Naive thymus-derived CD4-positive, alpha-beta T cell (primary cell): ENCODE measurements at regions of chr22 and their contacts with region 1.

Region 1: GRCh38 chr22:30968924-30969539 is at the start of gene TUG1:
- DNase-seq: peak; percentile 88 to 98 (median 97)
- ATAC-seq: peak; percentile 96
- H3K4me3 ChIP-seq: peak within 1 kb of the TSS; percentile 59
- H3K4me3 Mint-ChIP-seq: peak within 1 kb of the TSS; percentile 90 to 96 (median 93)
- H3K27ac ChIP-seq: peak within 1 kb of the TSS; percentile 94
- H3K27ac Mint-ChIP-seq: peak within 1 kb of the TSS; percentile 90 to 98 (median 97)
- H3K4me1 ChIP-seq: peaks cover 22 to 23% of the 10 kb centered on the region in 2 donors
- H3K4me1 Mint-ChIP-seq: peaks cover 12 to 67% (median 58%) of the 10 kb centered on the region in 7 donors
- H3K27me3 ChIP-seq: no peaks in the 10 kb centered on the region
- H3K27me3 Mint-ChIP-seq: peaks cover 0 to 4% (median 0%) of the 10 kb centered on the region in 5 donors
- total RNA-seq, gene TUG1: 82.7 to 159 (median 113) TPM

Region 2: GRCh38 chr22:29603358-29604075 is 1365.5 kb before region 1 on chr22 and contains the start of gene NF2:
- CTCF ChIA-PET with region 1: no interaction called
- POLR2A ChIA-PET with region 1: no interaction called
- intact Hi-C with region 1: loop called in 1 of 2 experiments (anchors 2 kb)
- DNase-seq: peak; percentile 96 to 99 (median 98)
- ATAC-seq: peak; percentile 98
- H3K4me3 ChIP-seq: peak within 1 kb of the TSS; percentile 92
- H3K4me3 Mint-ChIP-seq: peak within 1 kb of the TSS; percentile 85 to 98 (median 96)
- H3K27ac ChIP-seq: peak within 1 kb of the TSS; percentile 91
- H3K27ac Mint-ChIP-seq: peak within 1 kb of the TSS; percentile 91 to 99 (median 98)
- H3K4me1 ChIP-seq: peaks cover 11 to 16% of the 10 kb centered on the region in 2 donors
- H3K4me1 Mint-ChIP-seq: peaks cover 13 to 40% (median 28%) of the 10 kb centered on the region in 7 donors
- H3K27me3 ChIP-seq: no peaks in the 10 kb centered on the region
- H3K27me3 Mint-ChIP-seq: no peaks in the 10 kb centered on the region
- total RNA-seq, gene NF2: 27.6 to 56.3 (median 28.3) TPM

Region 3: DNA sequence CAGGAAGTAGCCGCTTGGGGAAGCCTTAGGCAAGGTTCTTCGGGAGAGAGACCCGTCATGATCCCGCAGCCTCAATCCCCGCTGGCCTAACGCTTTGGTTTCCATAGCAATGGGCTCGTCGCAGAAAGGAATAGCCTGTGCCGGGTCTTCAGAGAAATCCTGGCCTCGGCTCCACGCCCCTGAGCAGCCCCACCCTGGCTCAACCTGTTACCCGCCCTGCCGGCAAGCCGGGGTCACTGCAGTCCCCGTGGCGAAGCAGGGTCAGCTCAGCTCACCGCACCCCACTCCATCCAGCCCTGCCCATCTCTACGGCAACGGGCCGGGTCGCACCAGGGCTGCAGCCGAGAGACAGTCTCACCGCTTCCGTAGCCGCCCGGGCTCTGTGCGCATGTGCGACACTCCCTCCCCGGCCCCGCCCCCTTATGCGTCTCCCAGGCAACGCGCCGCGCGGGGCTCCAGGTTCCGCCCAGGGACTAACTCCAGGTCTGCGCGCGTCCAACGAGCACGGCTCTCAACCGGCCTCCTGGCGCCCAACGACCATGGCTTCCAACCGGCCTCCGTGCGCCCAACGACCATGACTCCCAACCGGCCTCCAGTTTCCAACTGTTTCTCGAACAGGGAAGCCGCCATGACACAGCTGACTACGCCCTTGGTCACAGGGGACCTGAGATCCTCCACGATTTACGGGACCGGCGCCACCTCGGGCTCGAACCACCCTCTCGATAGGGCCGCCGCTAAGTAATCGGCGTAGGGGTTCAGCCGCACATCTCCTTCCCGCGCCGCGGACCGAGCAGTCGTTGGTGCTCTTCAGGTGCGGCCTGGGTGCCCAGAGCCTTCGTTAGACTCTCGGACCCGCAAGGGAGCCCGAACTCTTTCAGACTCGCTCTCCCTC is 301.3 kb before region 1 on chr22 and contains the start of gene DUSP18:
- CTCF ChIA-PET with region 1: no interaction called
- POLR2A ChIA-PET with region 1: no interaction called
- intact Hi-C with region 1: loop called in 1 of 2 experiments (anchors 1 kb)
- DNase-seq: peak; percentile 87 to 95 (median 92)
- ATAC-seq: peak; percentile 96
- H3K4me3 ChIP-seq: peak within 1 kb of the TSS; percentile 98
- H3K4me3 Mint-ChIP-seq: peak within 1 kb of the TSS; percentile 90 to 98 (median 95)
- H3K27ac ChIP-seq: peak within 1 kb of the TSS; percentile 71
- H3K27ac Mint-ChIP-seq: peak within 1 kb of the TSS; percentile 74 to 97 (median 91)
- H3K4me1 ChIP-seq: peaks cover 4 to 6% of the 10 kb centered on the region in 2 donors
- H3K4me1 Mint-ChIP-seq: peaks cover 17 to 30% (median 24%) of the 10 kb centered on the region in 7 donors
- H3K27me3 ChIP-seq: no peaks in the 10 kb centered on the region
- H3K27me3 Mint-ChIP-seq: peaks cover 0 to 4% (median 0%) of the 10 kb centered on the region in 5 donors
- total RNA-seq, gene DUSP18: 7.4 to 18.5 (median 14.1) TPM

Region 4: GRCh38 chr22:30947816-30948454 is 21.1 kb before region 1 on chr22:
- CTCF ChIA-PET with region 1: interaction called, 18 read pairs
- POLR2A ChIA-PET with region 1: interaction called, 66 read pairs
- intact Hi-C with region 1: loop called in 1 of 2 experiments (anchors 1 kb)
- DNase-seq: peak in 7 of 9 donors; percentile 29 to 67 (median 52)
- ATAC-seq: peak; percentile 72
- H3K4me3 ChIP-seq: no peak overlapping the region
- H3K4me3 Mint-ChIP-seq: no peak overlapping the region
- H3K27ac ChIP-seq: peak overlapping the region; percentile 4
- H3K27ac Mint-ChIP-seq: no peak overlapping the region
- H3K4me1 ChIP-seq: peaks cover 11 to 63% of the 10 kb centered on the region in 2 donors
- H3K4me1 Mint-ChIP-seq: peaks cover 52 to 72% (median 65%) of the 10 kb centered on the region in 7 donors
- H3K27me3 ChIP-seq: no peaks in the 10 kb centered on the region
- H3K27me3 Mint-ChIP-seq: no peaks in the 10 kb centered on the region

Region 5: GRCh38 chr22:31080848-31081649 is 112.0 kb after region 1 on chr22 and contains the start of gene SMTN:
- CTCF ChIA-PET with region 1: interaction called, 3 read pairs
- POLR2A ChIA-PET with region 1: interaction called, 31 read pairs
- intact Hi-C with region 1: loop called (anchors 1 kb)
- DNase-seq: peak; percentile 75 to 90 (median 84)
- ATAC-seq: peak; percentile 83
- H3K4me3 ChIP-seq: peak within 1 kb of the TSS; percentile 84
- H3K4me3 Mint-ChIP-seq: peak within 1 kb of the TSS; percentile 83 to 93 (median 88)
- H3K27ac ChIP-seq: peak within 1 kb of the TSS; percentile 43
- H3K27ac Mint-ChIP-seq: peak within 1 kb of the TSS in 8 of 9 donors; percentile 35 to 78 (median 68)
- H3K4me1 ChIP-seq: peaks cover 13 to 39% of the 10 kb centered on the region in 2 donors
- H3K4me1 Mint-ChIP-seq: peaks cover 26 to 43% (median 38%) of the 10 kb centered on the region in 7 donors
- H3K27me3 ChIP-seq: no peaks in the 10 kb centered on the region
- H3K27me3 Mint-ChIP-seq: no peaks in the 10 kb centered on the region
- total RNA-seq, gene SMTN: 3.1 to 14.9 (median 6.2) TPM

Region 6: DNA sequence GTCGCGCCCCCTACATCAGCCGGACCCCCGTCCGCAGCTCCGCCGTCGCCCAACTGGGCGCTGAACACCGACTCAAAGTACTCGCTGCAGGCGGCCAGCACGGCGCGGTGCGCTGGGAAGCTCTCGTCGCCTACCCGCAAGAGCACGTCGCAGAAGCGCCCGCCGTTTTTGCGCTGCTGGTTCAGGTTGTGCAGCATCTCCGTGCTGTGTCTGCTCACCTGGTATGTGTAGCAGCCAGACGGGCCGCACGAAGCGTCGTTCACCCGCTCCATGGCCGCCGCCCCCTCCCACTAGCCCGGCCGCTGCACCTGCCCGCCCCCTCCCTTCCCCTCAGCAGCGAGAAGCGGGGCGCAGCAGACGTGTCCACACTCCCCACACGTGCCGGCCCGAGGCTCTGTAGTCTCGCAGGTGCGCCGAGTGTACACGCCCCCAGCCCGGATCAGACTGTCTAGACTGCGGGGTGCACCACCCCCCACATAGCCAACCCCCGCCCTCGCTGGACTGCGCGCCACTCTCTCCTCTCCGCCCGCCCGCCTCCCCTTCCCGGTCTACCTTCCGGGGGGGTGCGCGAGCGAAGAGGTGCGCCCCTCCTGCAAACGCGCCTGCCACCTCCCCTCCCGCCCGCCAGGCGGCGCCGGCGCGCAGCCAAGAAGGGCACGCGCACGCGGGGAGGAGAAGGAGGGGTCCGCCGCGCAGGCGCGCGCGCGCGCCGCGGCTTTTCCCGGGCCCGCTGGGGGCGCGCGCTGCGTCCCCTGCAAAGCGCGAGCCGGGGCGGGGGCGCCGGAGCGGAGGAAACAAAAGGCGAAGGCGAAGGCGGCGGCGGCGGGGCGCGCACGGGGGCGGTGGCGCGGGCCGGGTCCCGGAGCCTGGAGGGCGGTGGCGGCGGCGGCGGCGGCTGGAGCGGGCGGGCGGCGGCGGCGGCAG is 376.6 kb after region 1 on chr22:
- CTCF ChIA-PET with region 1: no interaction called
- POLR2A ChIA-PET with region 1: interaction called, 3 read pairs
- intact Hi-C with region 1: loop called in 1 of 2 experiments (anchors 1 kb)
- DNase-seq: peak; percentile 91 to 95 (median 93)
- ATAC-seq: peak; percentile 83
- H3K4me3 ChIP-seq: peak overlapping the region; percentile 60
- H3K4me3 Mint-ChIP-seq: peak overlapping the region; percentile 85 to 91 (median 88)
- H3K27ac ChIP-seq: peak overlapping the region; percentile 74
- H3K27ac Mint-ChIP-seq: peak overlapping the region; percentile 81 to 97 (median 92)
- H3K4me1 ChIP-seq: peaks cover 26 to 42% of the 10 kb centered on the region in 2 donors
- H3K4me1 Mint-ChIP-seq: peaks cover 32 to 57% (median 48%) of the 10 kb centered on the region in 7 donors
- H3K27me3 ChIP-seq: no peaks in the 10 kb centered on the region
- H3K27me3 Mint-ChIP-seq: peaks cover 0 to 4% (median 0%) of the 10 kb centered on the region in 5 donors